ENCODE measurements at regions of chr5 and their contacts with region 1.

Region 1: GRCh38 chr5:174951146-174951780 is 226.9 kb downstream of the MSX2 start:
- DNase-seq: peak; percentile 53
- H3K4me3 ChIP-seq: no peak overlapping the region
- H3K27ac ChIP-seq: no peak overlapping the region
- H3K4me1 ChIP-seq: no peaks in the 10 kb centered on the region
- H3K27me3 ChIP-seq: no peaks in the 10 kb centered on the region
- CTCF ChIP-seq: peak; percentile 57

Region 2: GRCh38 chr5:175032741-175033151 is 81.5 kb after region 1 on chr5:
- intact Hi-C with region 1: no loop called
- DNase-seq: no peak
- H3K4me3 ChIP-seq: no peak overlapping the region
- H3K27ac ChIP-seq: no peak overlapping the region
- H3K4me1 ChIP-seq: no peaks in the 10 kb centered on the region
- H3K27me3 ChIP-seq: no peaks in the 10 kb centered on the region
- CTCF ChIP-seq: no peak

Region 3: DNA sequence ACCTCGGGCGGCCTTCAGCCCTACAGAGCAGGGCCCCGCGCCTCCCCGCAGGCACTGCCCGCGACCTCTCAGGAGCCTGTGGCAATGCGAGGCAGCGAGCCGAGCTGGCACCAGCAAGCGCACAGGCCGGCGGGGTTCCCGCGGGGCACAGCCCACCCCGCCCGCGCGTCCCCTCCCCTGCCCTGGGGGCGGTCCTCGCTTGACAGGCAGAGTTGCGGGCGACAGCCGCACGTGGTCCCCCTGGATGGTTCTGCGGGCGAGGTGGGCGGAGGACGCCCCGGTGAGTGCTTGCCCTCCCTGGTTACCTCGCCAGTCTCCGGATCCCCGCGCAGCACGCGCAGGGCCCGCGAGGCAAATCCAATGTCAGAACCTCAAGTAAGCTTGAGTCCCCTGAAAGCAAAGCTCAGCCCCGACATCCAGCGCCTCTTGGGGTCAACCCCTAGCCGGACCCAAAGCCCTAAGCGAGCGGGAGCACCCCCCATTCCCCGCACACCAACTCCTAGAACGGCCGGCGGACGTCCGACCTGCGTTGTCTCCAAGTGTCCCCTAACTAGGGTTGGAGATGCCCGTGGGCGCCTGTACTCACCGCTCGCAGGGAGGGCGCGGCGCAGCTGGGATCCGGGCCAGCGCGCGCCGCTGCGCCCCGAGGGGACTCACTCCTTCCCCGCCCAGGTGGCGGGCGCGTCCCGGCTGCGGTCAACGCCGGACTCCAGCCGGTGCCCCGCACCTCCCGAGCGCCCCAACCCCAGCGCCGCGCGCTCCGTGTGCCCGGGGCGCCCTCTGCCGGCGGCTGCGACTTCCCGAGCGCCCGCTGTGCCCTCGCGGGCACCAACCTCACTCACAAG is 493.0 kb after region 1 on chr5 and contains the start of gene DRD1:
- intact Hi-C with region 1: loop called (anchors 2 kb)
- DNase-seq: peak; percentile 42
- H3K4me3 ChIP-seq: peak within 1 kb of the TSS; percentile 22
- H3K27ac ChIP-seq: no peak within 1 kb of the TSS
- H3K4me1 ChIP-seq: no peaks in the 10 kb centered on the region
- H3K27me3 ChIP-seq: peaks cover 23% of the 10 kb centered on the region
- CTCF ChIP-seq: peak; percentile 73
- total RNA-seq, gene DRD1: 0.10 TPM in 1 of 2 donors, not detected in the other

Region 4: GRCh38 chr5:175464074-175464941 is 513.0 kb after region 1 on chr5:
- intact Hi-C with region 1: loop called (anchors 5 kb)
- DNase-seq: peak; percentile 74
- H3K4me3 ChIP-seq: no peak overlapping the region
- H3K27ac ChIP-seq: no peak overlapping the region
- H3K4me1 ChIP-seq: no peaks in the 10 kb centered on the region
- H3K27me3 ChIP-seq: no peaks in the 10 kb centered on the region
- CTCF ChIP-seq: peak; percentile 71

Measured in colonic mucosa (tissue), 4 donors.